ENCODE measurements at regions of chr17 and their contacts with region 1.

Region 1: GRCh38 chr17:64506576-64507477 is at the start of gene CEP95:
- DNase-seq: peak; percentile 97
- ATAC-seq: peak; percentile 56
- H3K4me3 Mint-ChIP-seq: peak within 1 kb of the TSS; percentile 100
- H3K27ac Mint-ChIP-seq: peak within 1 kb of the TSS; percentile 100
- H3K4me1 Mint-ChIP-seq: peaks cover 48% of the 10 kb centered on the region
- H3K27me3 Mint-ChIP-seq: no peaks in the 10 kb centered on the region
- total RNA-seq, gene CEP95: 40.5 to 42.8 TPM

Region 2: DNA sequence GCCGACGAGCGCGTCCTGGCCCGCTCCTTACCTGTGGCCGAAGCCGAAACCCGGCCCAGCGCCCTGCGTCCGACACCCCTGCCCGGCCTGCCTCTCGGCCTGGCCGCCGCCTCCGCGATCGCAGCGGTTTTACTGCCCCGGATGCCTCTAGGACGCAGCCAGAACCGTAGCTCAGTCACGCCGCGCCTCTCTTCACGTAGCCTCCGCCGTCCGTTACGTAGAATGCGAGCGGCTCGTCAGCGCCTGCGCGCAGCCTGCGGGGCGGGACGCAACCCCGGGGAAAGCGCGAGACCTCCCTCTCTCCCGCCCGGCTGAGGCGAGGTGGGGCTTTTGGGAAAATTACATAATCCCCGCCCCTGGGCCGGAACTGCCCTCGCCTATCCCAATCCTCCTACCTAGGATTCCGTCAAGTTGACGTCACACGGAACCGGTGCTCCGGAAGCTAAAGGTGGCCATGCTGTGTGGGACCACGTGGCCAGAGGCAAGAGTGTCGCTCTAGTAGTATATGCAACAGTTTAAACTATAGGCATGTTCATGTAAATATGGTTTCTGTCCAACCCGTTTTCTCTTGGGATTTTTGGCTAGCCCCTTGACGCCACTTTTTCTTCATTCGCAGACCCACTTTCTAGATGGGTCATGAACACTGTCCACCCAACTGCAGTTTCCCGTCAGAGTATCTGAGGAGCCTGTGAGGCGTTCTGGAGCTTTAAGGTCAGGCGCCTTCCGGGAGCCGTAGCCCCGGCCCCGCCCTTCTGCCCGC is 733.3 kb before region 1 on chr17 and contains the start of gene CCDC47:
- CTCF ChIA-PET with region 1: no interaction called
- POLR2A ChIA-PET with region 1: no interaction called
- intact Hi-C with region 1: loop called in 1 of 2 experiments (anchors 1 kb)
- DNase-seq: peak; percentile 99
- ATAC-seq: peak; percentile 83
- H3K4me3 Mint-ChIP-seq: peak within 1 kb of the TSS; percentile 98
- H3K27ac Mint-ChIP-seq: peak within 1 kb of the TSS; percentile 97
- H3K4me1 Mint-ChIP-seq: peaks cover 57% of the 10 kb centered on the region
- H3K27me3 Mint-ChIP-seq: no peaks in the 10 kb centered on the region
- total RNA-seq, gene CCDC47: 76.9 to 82.3 TPM

Region 3: DNA sequence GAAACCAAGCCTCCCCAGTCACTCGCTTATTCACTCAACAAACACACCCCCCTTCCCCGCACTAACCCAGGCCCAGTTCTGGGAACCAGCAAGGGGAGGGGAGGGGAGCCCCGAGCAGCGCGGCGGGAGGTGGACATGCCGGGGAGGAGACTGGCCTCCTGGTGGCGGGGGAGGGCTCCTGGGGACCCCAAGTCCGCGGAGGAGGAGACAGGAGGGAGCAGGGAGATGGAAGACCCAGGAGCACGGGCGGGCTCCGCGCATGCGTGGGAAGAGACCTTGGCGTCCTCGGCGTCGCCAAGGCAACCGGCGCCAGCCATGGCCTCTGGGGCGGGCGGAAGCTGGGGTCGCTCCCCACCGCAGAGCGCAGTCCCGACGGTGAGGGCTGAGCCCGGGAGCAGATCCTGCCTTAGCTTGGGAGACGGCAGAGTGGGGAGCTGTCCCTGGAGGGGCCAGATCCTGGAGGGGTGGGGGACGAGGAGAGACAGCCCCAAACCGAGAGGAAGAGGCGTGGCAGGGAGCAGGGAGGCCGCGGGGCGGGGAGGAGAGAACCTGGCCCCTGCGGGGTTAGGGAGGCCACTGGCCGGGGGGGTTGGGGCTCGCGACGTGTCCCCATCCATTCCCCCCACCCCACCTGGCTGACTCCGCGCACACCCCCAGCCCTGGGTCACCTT is 508.6 kb before region 1 on chr17 and contains the start of gene PRR29:
- CTCF ChIA-PET with region 1: no interaction called
- POLR2A ChIA-PET with region 1: no interaction called
- intact Hi-C with region 1: no loop called
- DNase-seq: peak; percentile 84
- ATAC-seq: peak; percentile 76
- H3K4me3 Mint-ChIP-seq: peak within 1 kb of the TSS; percentile 80
- H3K27ac Mint-ChIP-seq: peak within 1 kb of the TSS; percentile 31
- H3K4me1 Mint-ChIP-seq: peaks cover 30% of the 10 kb centered on the region
- H3K27me3 Mint-ChIP-seq: no peaks in the 10 kb centered on the region
- total RNA-seq, gene PRR29: 1.0 to 1.5 TPM

Region 4: DNA sequence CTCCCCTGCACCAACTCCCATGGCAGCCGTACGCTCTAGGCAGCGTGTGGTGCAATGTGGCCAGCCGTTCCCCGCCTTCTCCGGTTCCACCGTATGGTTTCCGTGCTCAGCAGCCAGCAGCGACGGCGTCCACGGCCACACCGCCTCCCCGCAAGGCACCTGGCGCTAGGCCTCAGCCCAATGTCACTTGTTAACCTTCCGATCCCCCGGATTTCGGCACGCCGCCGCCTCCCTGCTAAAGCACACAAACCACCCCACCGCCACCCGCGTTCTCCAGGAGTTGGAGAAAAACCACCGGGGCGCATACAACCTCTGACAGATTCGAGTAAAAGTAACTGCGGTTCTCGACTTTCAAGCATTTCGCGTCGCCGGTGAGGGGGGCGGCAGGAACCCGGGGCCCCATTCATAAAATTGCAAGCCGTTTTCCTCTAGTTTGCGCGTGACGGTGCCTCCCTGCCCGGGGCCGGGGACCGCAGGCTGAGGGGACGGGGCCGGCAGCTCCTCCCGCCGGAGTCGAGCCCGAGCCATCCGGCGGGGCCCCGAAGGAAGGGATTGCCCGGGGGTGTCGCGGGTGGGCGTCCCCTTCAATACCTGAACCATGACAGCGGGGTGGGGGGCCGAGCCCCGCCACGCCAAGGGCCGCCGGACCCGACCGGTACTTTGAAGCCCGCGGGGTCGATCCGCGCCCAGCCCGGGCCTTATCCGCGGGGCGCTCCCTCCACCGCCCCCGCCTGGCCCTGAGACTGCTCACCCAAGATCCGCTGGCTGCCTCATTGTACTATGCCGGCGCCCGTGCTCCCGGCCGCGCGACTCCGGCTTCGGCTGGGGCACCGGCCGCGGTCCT is 244.2 kb before region 1 on chr17 and contains the start of gene TEX2:
- CTCF ChIA-PET with region 1: no interaction called
- POLR2A ChIA-PET with region 1: no interaction called
- intact Hi-C with region 1: loop called in 1 of 2 experiments (anchors 1 kb)
- DNase-seq: peak; percentile 78
- ATAC-seq: peak; percentile 27
- H3K4me3 Mint-ChIP-seq: peak within 1 kb of the TSS; percentile 96
- H3K27ac Mint-ChIP-seq: peak within 1 kb of the TSS; percentile 92
- H3K4me1 Mint-ChIP-seq: peaks cover 36% of the 10 kb centered on the region
- H3K27me3 Mint-ChIP-seq: no peaks in the 10 kb centered on the region
- total RNA-seq, gene TEX2: 15.2 to 15.8 TPM

Region 5: GRCh38 chr17:64591944-64592343 is 85.1 kb after region 1 on chr17:
- CTCF ChIA-PET with region 1: no interaction called
- POLR2A ChIA-PET with region 1: no interaction called
- intact Hi-C with region 1: no loop called
- DNase-seq: no peak
- ATAC-seq: no peak
- H3K4me3 Mint-ChIP-seq: no peak overlapping the region
- H3K27ac Mint-ChIP-seq: no peak overlapping the region
- H3K4me1 Mint-ChIP-seq: peaks cover 19% of the 10 kb centered on the region
- H3K27me3 Mint-ChIP-seq: no peaks in the 10 kb centered on the region

Region 6: DNA sequence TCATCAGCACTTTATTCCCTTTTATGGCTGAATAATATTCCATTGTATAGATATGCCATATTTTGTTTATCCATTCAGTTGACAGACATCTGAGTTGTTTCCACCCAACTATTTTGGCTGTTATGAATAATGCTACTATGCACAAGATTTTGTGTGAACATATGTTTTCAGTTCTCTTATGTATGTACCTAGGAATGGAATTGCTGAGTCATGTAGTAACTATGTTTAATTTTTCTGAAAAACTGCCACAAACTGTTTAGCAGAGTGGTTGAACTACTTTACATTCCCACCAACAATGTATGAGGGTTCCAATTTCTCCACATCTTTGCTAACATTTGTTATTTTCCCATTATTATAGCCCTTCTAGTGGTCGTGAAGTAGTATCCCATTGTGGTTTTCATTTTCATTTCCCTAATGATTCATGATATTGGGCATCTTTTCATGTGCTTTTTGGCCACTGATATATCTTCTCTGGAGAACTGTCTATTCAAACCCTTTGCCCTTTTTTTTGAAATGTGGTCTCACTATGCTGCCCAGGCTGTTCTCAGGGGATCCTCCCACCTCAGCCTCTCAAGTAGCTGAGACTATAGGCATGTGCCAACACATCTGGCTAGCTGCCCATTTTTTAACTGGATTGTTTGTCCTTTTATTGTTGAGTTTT is 128.9 kb after region 1 on chr17:
- CTCF ChIA-PET with region 1: no interaction called
- POLR2A ChIA-PET with region 1: interaction called, 3 read pairs
- intact Hi-C with region 1: loop called in 1 of 2 experiments (anchors 1 kb)
- DNase-seq: peak; percentile 29
- ATAC-seq: peak; percentile 79
- H3K4me3 Mint-ChIP-seq: no peak overlapping the region
- H3K27ac Mint-ChIP-seq: peak overlapping the region; percentile 79
- H3K4me1 Mint-ChIP-seq: peaks cover 54% of the 10 kb centered on the region
- H3K27me3 Mint-ChIP-seq: no peaks in the 10 kb centered on the region

Region 7: GRCh38 chr17:64975329-64976087 is 468.7 kb after region 1 on chr17:
- CTCF ChIA-PET with region 1: no interaction called
- POLR2A ChIA-PET with region 1: interaction called, 3 read pairs
- intact Hi-C with region 1: loop called in 1 of 2 experiments (anchors 1 kb)
- DNase-seq: peak; percentile 97
- ATAC-seq: peak; percentile 80
- H3K4me3 Mint-ChIP-seq: peak overlapping the region; percentile 81
- H3K27ac Mint-ChIP-seq: peak overlapping the region; percentile 98
- H3K4me1 Mint-ChIP-seq: peaks cover 59% of the 10 kb centered on the region
- H3K27me3 Mint-ChIP-seq: no peaks in the 10 kb centered on the region